ENCODE measurements at regions of chr5 and their contacts with region 1.

Region 1: GRCh38 chr5:35926389-35927051 is 11.9 kb downstream of the CAPSL start:
- DNase-seq: peak; percentile 29 to 80 (median 73)
- ATAC-seq: peak; percentile 70
- H3K4me3 ChIP-seq: no peak overlapping the region
- H3K4me3 Mint-ChIP-seq: peak overlapping the region; percentile 35 to 87 (median 58)
- H3K27ac ChIP-seq: no peak overlapping the region
- H3K27ac Mint-ChIP-seq: peak overlapping the region in 3 of 9 donors; percentile 1 to 60 (median 7)
- H3K4me1 ChIP-seq: peaks cover 10 to 14% of the 10 kb centered on the region in 2 donors
- H3K4me1 Mint-ChIP-seq: peaks cover 18 to 49% (median 35%) of the 10 kb centered on the region in 7 donors
- H3K27me3 ChIP-seq: no peaks in the 10 kb centered on the region
- H3K27me3 Mint-ChIP-seq: peaks cover 0 to 13% (median 5%) of the 10 kb centered on the region in 5 donors

Region 2: GRCh38 chr5:34522599-34523386 is 1403.7 kb before region 1 on chr5:
- CTCF ChIA-PET with region 1: no interaction called
- POLR2A ChIA-PET with region 1: no interaction called
- intact Hi-C with region 1: loop called in 1 of 2 experiments (anchors 1 kb)
- DNase-seq: peak in 7 of 9 donors; percentile 11 to 50 (median 38)
- ATAC-seq: peak; percentile 66
- H3K4me3 ChIP-seq: no peak overlapping the region
- H3K4me3 Mint-ChIP-seq: no peak overlapping the region
- H3K27ac ChIP-seq: no peak overlapping the region
- H3K27ac Mint-ChIP-seq: no peak overlapping the region
- H3K4me1 ChIP-seq: no peaks in the 10 kb centered on the region
- H3K4me1 Mint-ChIP-seq: peaks cover 0 to 4% (median 0%) of the 10 kb centered on the region in 7 donors
- H3K27me3 ChIP-seq: no peaks in the 10 kb centered on the region
- H3K27me3 Mint-ChIP-seq: peaks cover 4 to 6% (median 4%) of the 10 kb centered on the region in 5 donors

Region 3: GRCh38 chr5:35420200-35420990 is 506.1 kb before region 1 on chr5:
- CTCF ChIA-PET with region 1: no interaction called
- POLR2A ChIA-PET with region 1: no interaction called
- intact Hi-C with region 1: loop called in 1 of 2 experiments (anchors 5 kb)
- DNase-seq: no peak
- ATAC-seq: no peak
- H3K4me3 ChIP-seq: no peak overlapping the region
- H3K4me3 Mint-ChIP-seq: no peak overlapping the region
- H3K27ac ChIP-seq: no peak overlapping the region
- H3K27ac Mint-ChIP-seq: no peak overlapping the region
- H3K4me1 ChIP-seq: no peaks in the 10 kb centered on the region
- H3K4me1 Mint-ChIP-seq: no peaks in the 10 kb centered on the region
- H3K27me3 ChIP-seq: no peaks in the 10 kb centered on the region
- H3K27me3 Mint-ChIP-seq: peaks cover 8 to 33% (median 27%) of the 10 kb centered on the region in 5 donors

Region 4: GRCh38 chr5:35644543-35644942 is 282.0 kb before region 1 on chr5:
- CTCF ChIA-PET with region 1: interaction called, 137 read pairs
- POLR2A ChIA-PET with region 1: no interaction called
- intact Hi-C with region 1: no loop called
- DNase-seq: no peak
- ATAC-seq: no peak
- H3K4me3 ChIP-seq: no peak overlapping the region
- H3K4me3 Mint-ChIP-seq: no peak overlapping the region
- H3K27ac ChIP-seq: no peak overlapping the region
- H3K27ac Mint-ChIP-seq: no peak overlapping the region
- H3K4me1 ChIP-seq: no peaks in the 10 kb centered on the region
- H3K4me1 Mint-ChIP-seq: peaks cover 0 to 2% (median 0%) of the 10 kb centered on the region in 7 donors
- H3K27me3 ChIP-seq: no peaks in the 10 kb centered on the region
- H3K27me3 Mint-ChIP-seq: no peaks in the 10 kb centered on the region

Region 5: DNA sequence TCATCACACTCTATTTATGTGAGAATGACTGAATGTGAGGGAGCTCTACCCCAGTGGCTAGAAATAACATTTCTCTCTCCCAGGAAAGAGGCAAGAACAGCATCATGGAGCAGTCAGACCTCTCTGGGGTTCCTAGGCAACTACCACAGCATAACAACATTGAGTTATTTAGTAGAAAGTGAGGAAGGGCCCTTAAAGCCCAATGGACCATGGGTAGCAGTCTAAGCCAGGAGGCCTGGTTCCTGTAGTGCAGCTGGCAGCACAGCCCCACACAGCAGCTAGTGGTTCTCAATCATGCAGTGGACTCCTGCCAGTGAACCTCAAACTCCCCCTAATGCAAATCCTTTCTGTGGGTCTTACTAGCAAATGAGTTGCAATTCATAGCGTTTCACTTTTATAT is 253.5 kb before region 1 on chr5:
- CTCF ChIA-PET with region 1: interaction called, 3 read pairs
- POLR2A ChIA-PET with region 1: interaction called, 4 read pairs
- intact Hi-C with region 1: loop called (anchors 1 kb)
- DNase-seq: peak in 8 of 9 donors; percentile 30 to 68 (median 52)
- ATAC-seq: peak; percentile 88
- H3K4me3 ChIP-seq: peak overlapping the region; percentile 14
- H3K4me3 Mint-ChIP-seq: peak overlapping the region in 9 of 10 donors; percentile 47 to 81 (median 66)
- H3K27ac ChIP-seq: peak overlapping the region; percentile 62
- H3K27ac Mint-ChIP-seq: peak overlapping the region; percentile 87 to 96 (median 92)
- H3K4me1 ChIP-seq: peaks cover 36 to 41% of the 10 kb centered on the region in 2 donors
- H3K4me1 Mint-ChIP-seq: peaks cover 20 to 88% (median 75%) of the 10 kb centered on the region in 7 donors
- H3K27me3 ChIP-seq: no peaks in the 10 kb centered on the region
- H3K27me3 Mint-ChIP-seq: no peaks in the 10 kb centered on the region

Region 6: DNA sequence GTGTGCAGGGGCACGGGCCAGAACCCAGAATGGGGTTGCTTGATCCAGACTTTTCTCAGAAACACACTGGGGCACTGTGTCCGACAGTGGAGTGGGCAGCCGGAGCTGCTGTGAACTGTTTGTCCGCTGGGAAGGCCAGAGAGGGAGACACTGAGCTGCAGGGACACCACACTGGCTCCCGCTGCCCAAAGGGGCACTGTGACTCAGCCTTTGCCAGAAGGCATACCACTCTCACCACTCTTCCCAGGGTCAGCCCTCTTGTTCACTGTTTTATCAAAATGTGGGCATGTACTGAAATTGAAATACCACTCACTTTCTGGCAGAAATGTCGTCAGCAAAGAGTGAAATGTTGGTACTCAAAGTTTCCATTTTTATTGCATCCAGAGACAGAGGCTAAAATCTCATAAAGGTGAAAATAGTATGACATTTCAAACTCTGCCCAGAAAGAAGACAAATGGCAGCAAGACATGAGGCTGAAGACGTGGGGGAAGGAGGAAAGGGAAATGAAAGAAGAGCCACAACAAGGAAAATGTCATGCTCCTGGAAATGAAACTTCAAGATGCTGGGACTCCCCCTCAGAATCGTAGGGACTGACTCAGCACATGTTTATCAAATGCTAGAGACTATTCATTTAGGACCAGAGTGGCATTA is 74.3 kb before region 1 on chr5:
- CTCF ChIA-PET with region 1: interaction called, 12 read pairs
- POLR2A ChIA-PET with region 1: interaction called, 13 read pairs
- intact Hi-C with region 1: loop called (anchors 1 to 2 kb)
- DNase-seq: peak in 6 of 9 donors; percentile 42 to 74 (median 56)
- ATAC-seq: no peak
- H3K4me3 ChIP-seq: peak overlapping the region; percentile 55
- H3K4me3 Mint-ChIP-seq: peak overlapping the region; percentile 85 to 100 (median 92)
- H3K27ac ChIP-seq: peak overlapping the region; percentile 98
- H3K27ac Mint-ChIP-seq: peak overlapping the region; percentile 97 to 100 (median 99)
- H3K4me1 ChIP-seq: peaks cover 52 to 56% of the 10 kb centered on the region in 2 donors
- H3K4me1 Mint-ChIP-seq: peaks cover 31 to 89% (median 72%) of the 10 kb centered on the region in 7 donors
- H3K27me3 ChIP-seq: no peaks in the 10 kb centered on the region
- H3K27me3 Mint-ChIP-seq: no peaks in the 10 kb centered on the region

Region 7: GRCh38 chr5:35963381-35963843 is 36.9 kb after region 1 on chr5:
- CTCF ChIA-PET with region 1: no interaction called
- POLR2A ChIA-PET with region 1: no interaction called
- intact Hi-C with region 1: no loop called
- DNase-seq: no peak
- ATAC-seq: no peak
- H3K4me3 ChIP-seq: no peak overlapping the region
- H3K4me3 Mint-ChIP-seq: no peak overlapping the region
- H3K27ac ChIP-seq: no peak overlapping the region
- H3K27ac Mint-ChIP-seq: no peak overlapping the region
- H3K4me1 ChIP-seq: no peaks in the 10 kb centered on the region
- H3K4me1 Mint-ChIP-seq: no peaks in the 10 kb centered on the region
- H3K27me3 ChIP-seq: no peaks in the 10 kb centered on the region
- H3K27me3 Mint-ChIP-seq: peaks cover 16 to 47% (median 25%) of the 10 kb centered on the region in 5 donors

Measured in naive thymus-derived CD4-positive, alpha-beta T cell (primary cell).